PC-3 (cell line): ENCODE measurements at regions of chr16 and their contacts with region 1.

Region 1: GRCh38 chr16:75899163-75899562 is 172.9 kb upstream of the CPHXL start:
- DNase-seq: no peak
- ATAC-seq: no peak
- H3K4me3 ChIP-seq: no peak overlapping the region
- H3K27ac ChIP-seq: no peak overlapping the region
- H3K4me1 ChIP-seq: no peaks in the 10 kb centered on the region
- H3K27me3 ChIP-seq: peaks cover 25% of the 10 kb centered on the region; the same call in 1 of the 2 replicates
- CTCF ChIP-seq: no peak

Region 2: DNA sequence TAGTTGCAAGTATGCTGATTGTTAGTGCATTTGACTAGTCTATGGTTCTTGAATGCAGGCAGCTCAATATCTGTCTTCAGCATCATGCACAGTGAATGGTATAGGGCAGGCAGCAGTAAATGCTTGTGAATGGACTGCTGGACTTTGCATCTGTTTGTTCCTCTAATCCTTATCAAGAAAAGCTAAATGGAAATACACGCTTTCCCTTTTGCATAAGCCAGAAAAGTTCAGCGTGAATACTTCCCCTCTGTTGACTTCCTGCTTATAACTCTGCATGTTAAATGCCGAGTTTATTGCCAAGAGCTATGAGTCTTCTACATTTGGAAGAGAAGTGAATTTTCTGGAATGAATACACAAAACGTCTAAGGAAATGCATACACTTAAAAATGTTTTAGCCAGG is 45.0 kb before region 1 on chr16:
- CTCF ChIA-PET with region 1: no interaction called
- POLR2A ChIA-PET with region 1: no interaction called
- intact Hi-C with region 1: no loop called
- DNase-seq: no peak
- ATAC-seq: no peak
- H3K4me3 ChIP-seq: no peak overlapping the region
- H3K27ac ChIP-seq: no peak overlapping the region
- H3K4me1 ChIP-seq: no peaks in the 10 kb centered on the region
- H3K27me3 ChIP-seq: peaks cover 41% of the 10 kb centered on the region
- CTCF ChIP-seq: no peak

Region 3: GRCh38 chr16:75938818-75939217 is 39.7 kb after region 1 on chr16:
- CTCF ChIA-PET with region 1: no interaction called
- POLR2A ChIA-PET with region 1: interaction called, 12 read pairs
- intact Hi-C with region 1: no loop called
- DNase-seq: peak; percentile 40
- ATAC-seq: no peak
- H3K4me3 ChIP-seq: no peak overlapping the region
- H3K27ac ChIP-seq: no peak overlapping the region
- H3K4me1 ChIP-seq: no peaks in the 10 kb centered on the region
- H3K27me3 ChIP-seq: peaks cover 19% of the 10 kb centered on the region
- CTCF ChIP-seq: no peak

Region 4: DNA sequence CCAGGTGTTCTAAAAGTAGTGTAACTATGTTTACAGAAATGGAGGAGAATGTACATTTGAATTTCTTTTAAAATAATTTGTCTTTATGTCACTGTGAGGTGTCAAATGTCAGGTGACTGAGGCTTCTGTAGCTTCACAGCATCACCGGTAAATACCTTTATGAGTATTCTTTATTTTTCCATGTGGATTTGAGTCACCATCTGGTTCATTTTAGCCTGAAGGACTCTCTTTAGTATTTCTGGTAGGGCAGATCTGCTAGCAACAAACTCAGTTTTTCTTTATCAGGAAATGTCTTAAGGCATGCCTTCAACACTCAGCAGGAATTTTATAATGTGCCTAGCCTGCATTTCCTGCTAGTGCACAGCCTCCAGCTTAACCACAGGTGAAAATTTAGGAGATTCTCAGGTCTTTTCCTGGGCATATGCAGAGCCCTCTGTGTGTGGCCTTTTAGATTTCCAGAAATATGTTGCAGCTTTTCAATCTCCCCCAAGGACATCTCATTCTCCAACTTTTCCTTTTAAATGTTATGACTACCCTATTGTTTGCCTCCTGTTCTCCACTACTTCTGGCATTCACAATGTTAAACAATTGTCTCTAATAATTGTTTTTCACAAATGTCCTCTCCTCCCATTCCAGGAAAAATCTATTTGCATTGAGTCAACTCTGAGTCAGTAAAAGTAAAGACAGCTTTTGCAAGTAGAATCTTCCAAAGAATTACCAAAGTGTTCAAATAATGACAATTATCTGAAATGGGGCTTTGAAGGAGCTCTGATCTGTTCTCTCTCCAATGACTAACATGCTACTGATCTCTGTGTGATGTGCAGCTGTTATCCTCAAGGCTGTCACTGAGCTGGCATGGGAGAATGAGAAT is 66.6 kb after region 1 on chr16:
- CTCF ChIA-PET with region 1: no interaction called
- POLR2A ChIA-PET with region 1: no interaction called
- intact Hi-C with region 1: no loop called
- DNase-seq: peak; percentile 53
- ATAC-seq: no peak
- H3K4me3 ChIP-seq: no peak overlapping the region
- H3K27ac ChIP-seq: no peak overlapping the region
- H3K4me1 ChIP-seq: peaks cover 9% of the 10 kb centered on the region; the same call in 1 of the 2 replicates
- H3K27me3 ChIP-seq: 0 out of 2 replicates have a peak, but pooled peaks cover 3% of the 10 kb centered on the region
- CTCF ChIP-seq: no peak